Dendritic cell treated with granulocyte-macrophage colony-stimulating factor and Interleukin-4, amounts not matched to agents 40 ng/mL and 50 ng/mL, for 4 days (primary cell): ENCODE measurements at regions of chr20 and their contacts with region 1.

Region 1: GRCh38 chr20:5779071-5779900 is 29.1 kb downstream of the SHLD1 start:
- H3K4me3 Mint-ChIP-seq: no peak overlapping the region
- H3K27ac Mint-ChIP-seq: no peak overlapping the region
- H3K4me1 Mint-ChIP-seq: peaks cover 7% of the 10 kb centered on the region
- H3K27me3 Mint-ChIP-seq: no peaks in the 10 kb centered on the region

Region 2: GRCh38 chr20:5592823-5593739 is 186.2 kb before region 1 on chr20:
- intact Hi-C with region 1: loop called (anchors 5 kb)
- H3K4me3 Mint-ChIP-seq: no peak overlapping the region
- H3K27ac Mint-ChIP-seq: peak overlapping the region; percentile 37
- H3K4me1 Mint-ChIP-seq: peaks cover 25% of the 10 kb centered on the region
- H3K27me3 Mint-ChIP-seq: no peaks in the 10 kb centered on the region

Region 3: DNA sequence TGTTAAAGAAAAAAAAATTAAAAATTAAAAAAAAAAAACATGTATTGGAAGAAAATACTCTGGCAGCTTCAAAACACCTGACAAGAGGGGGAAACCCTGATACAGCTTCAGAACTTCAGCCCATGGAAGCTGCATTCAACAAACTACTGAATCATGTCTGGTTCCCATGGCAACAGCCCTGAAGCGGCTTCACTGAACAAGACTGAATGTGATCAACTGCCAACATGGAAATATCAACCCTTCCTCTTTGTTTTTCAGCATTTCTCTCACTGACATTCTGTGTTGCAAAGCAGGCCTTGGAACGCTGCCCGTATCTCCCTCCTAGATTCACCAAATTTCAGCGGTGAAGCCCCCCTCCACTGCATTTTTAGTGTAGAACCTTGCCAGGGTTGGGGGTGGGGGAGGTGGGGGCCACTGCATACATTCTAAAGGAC is 120.4 kb before region 1 on chr20:
- intact Hi-C with region 1: no loop called
- H3K4me3 Mint-ChIP-seq: no peak overlapping the region
- H3K27ac Mint-ChIP-seq: peak overlapping the region; percentile 88
- H3K4me1 Mint-ChIP-seq: peaks cover 72% of the 10 kb centered on the region
- H3K27me3 Mint-ChIP-seq: no peaks in the 10 kb centered on the region